ENCODE measurements at regions of chr13 and their contacts with region 1.

Region 1: GRCh38 chr13:96810104-96810503 is 184.2 kb downstream of the OXGR1 start:
- DNase-seq: no peak
- ATAC-seq: peak in 2 of 4 donors; percentile 26 to 46
- H3K4me3 ChIP-seq: no peak overlapping the region
- H3K27ac ChIP-seq: no peak overlapping the region
- H3K4me1 ChIP-seq: peaks cover 0 to 7% (median 0%) of the 10 kb centered on the region in 12 donors
- H3K27me3 ChIP-seq: no peaks in the 10 kb centered on the region
- CTCF ChIP-seq: no peak
- POLR2A ChIP-seq: no peak

Region 2: DNA sequence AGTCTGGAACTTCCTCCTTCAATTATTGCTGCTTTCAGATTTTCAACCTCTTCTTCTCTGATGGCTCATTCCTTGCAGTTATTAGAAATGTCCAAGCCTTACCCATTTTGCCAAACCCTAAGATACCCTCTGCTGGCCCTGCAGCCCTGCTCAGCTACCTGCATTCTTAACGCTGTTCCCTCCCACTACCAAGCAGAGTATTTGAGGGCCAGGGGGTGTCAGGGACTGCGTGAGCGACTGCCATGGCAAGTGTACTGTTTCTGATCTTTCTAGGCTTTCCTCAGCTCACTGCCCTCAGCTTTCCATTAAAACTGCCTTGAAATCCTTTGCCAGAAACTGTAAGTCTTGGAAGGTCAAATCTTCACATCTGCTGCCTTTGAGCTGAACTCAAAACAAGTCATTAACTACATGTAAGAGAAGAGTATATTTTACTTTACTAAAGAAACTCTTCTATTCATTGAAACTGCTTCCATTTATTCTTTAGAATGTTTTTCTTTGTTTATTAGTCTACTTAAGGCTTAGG is 679.2 kb before region 1 on chr13:
- intact Hi-C with region 1: loop called in 1 of 10 experiments (anchors 10 kb)
- DNase-seq: no peak
- ATAC-seq: no peak
- H3K4me3 ChIP-seq: no peak overlapping the region
- H3K27ac ChIP-seq: no peak overlapping the region
- H3K4me1 ChIP-seq: no peaks in the 10 kb centered on the region
- H3K27me3 ChIP-seq: no peaks in the 10 kb centered on the region
- CTCF ChIP-seq: no peak
- POLR2A ChIP-seq: no peak

Region 3: DNA sequence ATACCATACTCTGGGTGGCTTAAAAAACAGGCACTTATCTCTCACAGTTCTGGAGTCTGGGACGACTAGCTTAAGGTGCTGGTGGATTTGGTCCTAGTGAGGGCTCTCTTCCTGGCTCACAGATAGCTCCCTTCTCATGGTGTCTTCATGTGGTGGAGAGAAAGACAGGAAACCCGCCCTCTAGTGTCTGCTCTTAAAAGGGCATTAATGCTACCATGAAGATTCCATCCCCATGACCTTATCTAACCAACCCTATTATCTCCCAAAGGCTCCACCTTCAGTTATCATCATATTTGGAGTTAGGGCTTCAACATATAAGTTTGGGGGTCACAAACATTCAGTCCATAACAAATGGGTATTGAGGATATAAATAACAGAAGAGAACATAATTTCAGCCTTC is 580.7 kb before region 1 on chr13:
- intact Hi-C with region 1: loop called in 1 of 10 experiments (anchors 5 kb)
- DNase-seq: no peak
- ATAC-seq: no peak
- H3K4me3 ChIP-seq: no peak overlapping the region
- H3K27ac ChIP-seq: no peak overlapping the region
- H3K4me1 ChIP-seq: no peaks in the 10 kb centered on the region
- H3K27me3 ChIP-seq: no peaks in the 10 kb centered on the region
- CTCF ChIP-seq: peak in 10 of 12 donors; percentile 14 to 46 (median 36)
- POLR2A ChIP-seq: no peak

Region 4: GRCh38 chr13:96762876-96763275 is 47.2 kb before region 1 on chr13:
- intact Hi-C with region 1: no loop called
- DNase-seq: no peak
- ATAC-seq: no peak
- H3K4me3 ChIP-seq: no peak overlapping the region
- H3K27ac ChIP-seq: no peak overlapping the region
- H3K4me1 ChIP-seq: no peaks in the 10 kb centered on the region
- H3K27me3 ChIP-seq: no peaks in the 10 kb centered on the region
- CTCF ChIP-seq: no peak
- POLR2A ChIP-seq: no peak

Region 5: GRCh38 chr13:96871469-96871868 is 61.4 kb after region 1 on chr13:
- intact Hi-C with region 1: no loop called
- DNase-seq: no peak
- ATAC-seq: no peak
- H3K4me3 ChIP-seq: no peak overlapping the region
- H3K27ac ChIP-seq: no peak overlapping the region
- H3K4me1 ChIP-seq: no peaks in the 10 kb centered on the region
- H3K27me3 ChIP-seq: peaks cover 0 to 8% (median 0%) of the 10 kb centered on the region in 9 donors
- CTCF ChIP-seq: no peak
- POLR2A ChIP-seq: no peak